B cell (primary cell): ENCODE measurements at regions of chr6 and their contacts with region 1.

Region 1: GRCh38 chr6:30678964-30679726 is 6.3 kb upstream of the DHX16 start:
- DNase-seq: peak; percentile 92
- ATAC-seq: peak; percentile 29
- H3K4me3 ChIP-seq: peak overlapping the region in 4 of 5 experiments; percentile 31 to 100 (median 37)
- H3K4me3 Mint-ChIP-seq: peak overlapping the region; percentile 65
- H3K27ac ChIP-seq: peak overlapping the region in 1 of 2 donors; percentile 97
- H3K27ac Mint-ChIP-seq: peak overlapping the region; percentile 99
- H3K4me1 ChIP-seq: peaks cover 38 to 39% of the 10 kb centered on the region in 2 donors
- H3K4me1 Mint-ChIP-seq: peaks cover 51% of the 10 kb centered on the region
- H3K27me3 ChIP-seq: no peaks in the 10 kb centered on the region
- H3K27me3 Mint-ChIP-seq: no peaks in the 10 kb centered on the region
- CTCF ChIP-seq: peak; percentile 94

Region 2: DNA sequence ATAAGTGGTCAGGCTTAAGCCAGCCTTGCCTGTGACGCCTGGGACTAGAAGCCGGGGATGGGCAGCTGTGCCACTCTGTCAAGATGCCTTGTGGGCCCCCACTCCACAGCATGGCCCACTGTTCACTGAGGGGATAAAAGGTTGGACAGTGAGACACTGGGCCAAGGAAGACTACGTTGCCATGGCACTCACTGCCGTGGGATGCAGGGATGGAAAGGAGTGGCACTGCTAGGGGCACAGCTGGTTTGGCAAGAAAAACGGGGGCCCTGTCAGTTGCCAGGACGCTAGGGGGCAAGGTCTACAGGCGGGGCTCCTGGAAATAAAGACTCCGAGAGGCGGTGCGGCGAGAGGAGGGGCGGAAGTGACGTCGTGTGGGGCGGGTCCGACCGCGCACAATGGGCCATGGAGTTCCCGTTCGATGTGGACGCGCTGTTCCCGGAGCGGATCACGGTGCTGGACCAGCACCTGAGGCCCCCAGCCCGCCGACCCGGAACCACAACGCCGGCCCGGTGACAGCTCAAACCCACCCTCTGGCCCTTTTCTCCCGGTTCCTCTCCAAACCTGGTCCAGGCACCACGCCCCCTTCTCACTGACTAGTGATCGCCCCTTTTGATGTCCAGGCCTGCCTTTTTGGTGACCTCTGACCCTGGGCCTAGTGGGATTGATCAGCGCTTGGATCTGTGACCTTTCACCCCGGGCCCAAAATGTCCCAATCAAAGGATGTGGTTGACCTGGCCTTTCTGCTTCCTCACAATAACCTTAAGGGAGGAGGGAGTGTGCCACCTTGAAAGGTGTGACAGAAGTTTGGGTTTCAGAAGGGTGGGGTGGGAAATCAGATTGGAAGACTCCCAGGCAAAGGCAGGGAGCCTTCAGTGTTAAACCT is 52.4 kb before region 1 on chr6 and contains the start of gene ATAT1:
- CTCF ChIA-PET with region 1: interaction called, 10 read pairs
- POLR2A ChIA-PET with region 1: interaction called, 5 read pairs
- intact Hi-C with region 1: no loop called
- DNase-seq: peak; percentile 93
- ATAC-seq: peak; percentile 99
- H3K4me3 ChIP-seq: peak within 1 kb of the TSS; percentile 60 to 87 (median 72)
- H3K4me3 Mint-ChIP-seq: peak within 1 kb of the TSS; percentile 93
- H3K27ac ChIP-seq: peak within 1 kb of the TSS; percentile 84 to 87
- H3K27ac Mint-ChIP-seq: peak within 1 kb of the TSS; percentile 89
- H3K4me1 ChIP-seq: peaks cover 12 to 18% of the 10 kb centered on the region in 2 donors
- H3K4me1 Mint-ChIP-seq: peaks cover 19% of the 10 kb centered on the region
- H3K27me3 ChIP-seq: no peaks in the 10 kb centered on the region
- H3K27me3 Mint-ChIP-seq: no peaks in the 10 kb centered on the region
- CTCF ChIP-seq: peak; percentile 64
- total RNA-seq, gene ATAT1: 19.3 and 21.5 TPM in 2 replicates

Region 3: DNA sequence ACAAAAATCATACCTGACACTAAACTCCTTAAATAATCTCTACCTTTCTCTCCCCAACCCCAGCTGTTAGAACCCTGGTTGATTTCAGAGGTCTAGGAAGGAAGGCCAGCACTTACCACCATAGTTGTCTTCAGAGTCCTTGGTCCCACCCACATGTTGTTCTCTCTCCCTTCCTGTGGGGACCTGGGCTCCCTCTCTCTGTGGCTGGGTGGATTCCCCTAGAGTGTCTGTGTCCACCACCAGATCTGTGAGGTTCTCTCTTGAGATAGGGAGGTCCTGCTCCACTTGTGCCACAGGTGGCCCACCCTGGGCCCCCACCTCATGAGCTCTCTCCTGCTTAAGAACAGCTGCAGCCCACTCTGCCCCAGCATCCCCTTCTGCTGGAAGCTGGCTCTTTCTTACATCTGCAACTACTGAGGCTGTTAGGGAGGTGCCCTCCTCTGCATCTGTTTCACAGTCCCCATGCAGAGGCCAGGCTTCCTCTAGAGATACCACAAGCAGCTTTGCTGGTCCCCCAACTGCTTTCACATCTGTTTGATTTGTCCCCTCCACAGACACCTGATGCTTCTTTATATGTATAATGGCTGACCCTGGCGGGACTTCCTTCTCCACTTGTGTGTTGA is 32.7 kb after region 1 on chr6:
- CTCF ChIA-PET with region 1: interaction called, 963 read pairs
- POLR2A ChIA-PET with region 1: interaction called, 216 read pairs
- intact Hi-C with region 1: loop called (anchors 1 kb)
- DNase-seq: no peak
- ATAC-seq: no peak
- H3K4me3 ChIP-seq: no peak overlapping the region
- H3K4me3 Mint-ChIP-seq: no peak overlapping the region
- H3K27ac ChIP-seq: no peak overlapping the region
- H3K27ac Mint-ChIP-seq: no peak overlapping the region
- H3K4me1 ChIP-seq: peaks cover 7 to 8% of the 10 kb centered on the region in 2 donors
- H3K4me1 Mint-ChIP-seq: peaks cover 15% of the 10 kb centered on the region
- H3K27me3 ChIP-seq: no peaks in the 10 kb centered on the region
- H3K27me3 Mint-ChIP-seq: no peaks in the 10 kb centered on the region
- CTCF ChIP-seq: no peak

Region 4: GRCh38 chr6:30877419-30878371 is 198.6 kb after region 1 on chr6:
- CTCF ChIA-PET with region 1: interaction called, 5 read pairs
- POLR2A ChIA-PET with region 1: interaction called, 4 read pairs
- intact Hi-C with region 1: loop called (anchors 5 kb)
- DNase-seq: peak; percentile 79
- ATAC-seq: peak; percentile 82
- H3K4me3 ChIP-seq: peak overlapping the region in 1 of 5 experiments; percentile 21
- H3K4me3 Mint-ChIP-seq: peak overlapping the region; percentile 48
- H3K27ac ChIP-seq: peak overlapping the region in 1 of 2 donors; percentile 44
- H3K27ac Mint-ChIP-seq: peak overlapping the region; percentile 54
- H3K4me1 ChIP-seq: peaks cover 27 to 28% of the 10 kb centered on the region in 2 donors
- H3K4me1 Mint-ChIP-seq: peaks cover 37% of the 10 kb centered on the region
- H3K27me3 ChIP-seq: no peaks in the 10 kb centered on the region
- H3K27me3 Mint-ChIP-seq: peaks cover 3% of the 10 kb centered on the region
- CTCF ChIP-seq: peak; percentile 82